Naive thymus-derived CD4-positive, alpha-beta T cell (primary cell): ENCODE measurements at regions of chr12 and their contacts with region 1.

Region 1: GRCh38 chr12:48936379-48936979 is 11.2 kb upstream of the FKBP11 start:
- DNase-seq: peak; percentile 65 to 87 (median 77)
- ATAC-seq: peak; percentile 80
- H3K4me3 ChIP-seq: no peak overlapping the region
- H3K4me3 Mint-ChIP-seq: no peak overlapping the region
- H3K27ac ChIP-seq: no peak overlapping the region
- H3K27ac Mint-ChIP-seq: peak overlapping the region; percentile 1 to 85 (median 68)
- H3K4me1 ChIP-seq: peaks cover 6 to 34% of the 10 kb centered on the region in 2 donors
- H3K4me1 Mint-ChIP-seq: peaks cover 12 to 31% (median 16%) of the 10 kb centered on the region in 7 donors
- H3K27me3 ChIP-seq: no peaks in the 10 kb centered on the region
- H3K27me3 Mint-ChIP-seq: no peaks in the 10 kb centered on the region

Region 2: DNA sequence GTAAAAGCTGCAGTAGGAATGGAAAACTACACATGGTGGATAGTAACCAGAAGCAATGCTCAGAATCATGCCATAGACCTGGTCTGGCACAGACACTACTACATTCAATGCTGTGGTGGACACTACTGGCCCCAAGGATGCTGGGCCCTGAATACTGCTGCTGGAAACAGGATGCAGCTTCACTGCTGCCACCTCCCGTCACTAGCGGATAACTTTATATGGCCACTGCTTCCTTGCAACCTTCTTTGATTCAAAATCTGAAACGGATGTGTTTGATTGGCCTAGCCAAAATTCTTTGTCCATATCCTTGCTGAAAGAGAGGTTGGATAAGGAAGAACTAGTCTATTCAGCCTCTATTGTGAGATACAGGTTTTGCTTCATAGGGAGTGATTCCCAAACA is 178.3 kb before region 1 on chr12:
- CTCF ChIA-PET with region 1: no interaction called
- POLR2A ChIA-PET with region 1: no interaction called
- intact Hi-C with region 1: loop called in 1 of 2 experiments (anchors 2 kb)
- DNase-seq: no peak
- ATAC-seq: no peak
- H3K4me3 ChIP-seq: no peak overlapping the region
- H3K4me3 Mint-ChIP-seq: no peak overlapping the region
- H3K27ac ChIP-seq: no peak overlapping the region
- H3K27ac Mint-ChIP-seq: no peak overlapping the region
- H3K4me1 ChIP-seq: no peaks in the 10 kb centered on the region
- H3K4me1 Mint-ChIP-seq: peaks cover 0 to 1% (median 0%) of the 10 kb centered on the region in 7 donors
- H3K27me3 ChIP-seq: no peaks in the 10 kb centered on the region
- H3K27me3 Mint-ChIP-seq: peaks cover 0 to 3% (median 0%) of the 10 kb centered on the region in 5 donors

Region 3: DNA sequence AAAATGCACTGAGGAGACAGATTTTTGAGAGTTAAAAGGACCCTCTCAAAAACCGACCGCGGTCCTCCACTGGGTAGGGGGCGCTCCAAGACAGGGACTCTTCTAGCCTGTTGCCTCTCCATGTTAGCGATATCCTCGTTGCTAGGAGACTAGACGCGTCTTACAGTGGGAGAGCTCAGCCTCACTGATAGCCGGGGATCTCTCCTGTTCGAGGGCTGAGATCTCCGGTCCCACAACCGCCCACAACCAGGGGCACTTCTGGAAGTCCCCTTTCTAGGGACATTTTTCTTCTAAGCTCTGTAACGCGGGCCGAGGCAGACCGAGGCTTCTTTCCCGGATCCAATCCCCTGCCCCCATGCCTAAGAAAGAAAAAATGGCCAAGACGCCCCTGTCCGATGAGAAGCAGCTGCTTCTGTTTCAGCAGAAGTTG is 32.5 kb before region 1 on chr12:
- CTCF ChIA-PET with region 1: interaction called, 128 read pairs
- POLR2A ChIA-PET with region 1: interaction called, 7 read pairs
- intact Hi-C with region 1: loop called (anchors 1 kb)
- DNase-seq: peak; percentile 64 to 89 (median 83)
- ATAC-seq: peak; percentile 100
- H3K4me3 ChIP-seq: peak overlapping the region; percentile 60
- H3K4me3 Mint-ChIP-seq: peak overlapping the region; percentile 48 to 81 (median 78)
- H3K27ac ChIP-seq: no peak overlapping the region
- H3K27ac Mint-ChIP-seq: peak overlapping the region in 5 of 9 donors; percentile 32 to 84 (median 57)
- H3K4me1 ChIP-seq: peaks cover 0 to 9% of the 10 kb centered on the region in 2 donors
- H3K4me1 Mint-ChIP-seq: peaks cover 0 to 11% (median 8%) of the 10 kb centered on the region in 7 donors
- H3K27me3 ChIP-seq: no peaks in the 10 kb centered on the region
- H3K27me3 Mint-ChIP-seq: peaks cover 0 to 7% (median 0%) of the 10 kb centered on the region in 5 donors

Region 4: DNA sequence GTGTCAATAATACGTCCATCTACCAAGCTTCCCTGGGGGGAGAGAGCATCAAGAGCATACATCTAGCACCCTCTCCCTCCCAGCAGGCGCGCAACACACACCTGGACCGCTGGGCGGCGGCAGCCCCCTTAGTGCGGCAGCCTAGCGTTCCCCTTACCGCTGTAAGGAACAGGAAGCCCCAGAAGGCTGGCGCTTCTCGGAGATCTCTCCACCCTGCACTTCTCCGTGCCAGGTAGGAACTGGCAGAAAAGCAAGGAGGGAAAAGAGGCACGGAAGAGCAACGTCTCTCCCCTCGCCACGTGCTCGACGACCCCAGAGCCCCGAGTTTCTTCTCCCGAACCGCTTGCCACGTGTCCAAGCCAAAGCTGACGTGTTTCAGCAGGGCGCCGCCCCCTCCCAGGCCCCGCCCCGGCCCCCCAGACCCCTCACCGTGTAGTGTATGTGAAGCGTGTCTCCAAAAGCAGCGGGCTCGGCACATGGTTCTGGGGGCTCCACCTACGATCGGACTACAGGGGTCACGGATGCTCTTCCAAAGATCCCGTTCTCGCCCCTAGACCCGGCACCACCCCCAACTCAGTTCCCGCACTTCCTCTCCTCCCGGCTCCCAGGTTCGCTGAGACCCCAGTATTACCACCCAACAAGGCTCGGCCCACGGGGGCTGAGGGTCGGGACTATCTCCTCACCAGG is 11.7 kb before region 1 on chr12:
- CTCF ChIA-PET with region 1: interaction called, 17 read pairs
- POLR2A ChIA-PET with region 1: interaction called, 18 read pairs
- intact Hi-C with region 1: loop called (anchors 1 kb)
- DNase-seq: peak; percentile 56 to 80 (median 77)
- ATAC-seq: peak; percentile 86
- H3K4me3 ChIP-seq: peak overlapping the region; percentile 72
- H3K4me3 Mint-ChIP-seq: peak overlapping the region; percentile 89 to 98 (median 93)
- H3K27ac ChIP-seq: peak overlapping the region; percentile 99
- H3K27ac Mint-ChIP-seq: peak overlapping the region; percentile 74 to 98 (median 95)
- H3K4me1 ChIP-seq: peaks cover 10 to 18% of the 10 kb centered on the region in 2 donors
- H3K4me1 Mint-ChIP-seq: peaks cover 18 to 52% (median 42%) of the 10 kb centered on the region in 7 donors
- H3K27me3 ChIP-seq: no peaks in the 10 kb centered on the region
- H3K27me3 Mint-ChIP-seq: no peaks in the 10 kb centered on the region

Region 5: DNA sequence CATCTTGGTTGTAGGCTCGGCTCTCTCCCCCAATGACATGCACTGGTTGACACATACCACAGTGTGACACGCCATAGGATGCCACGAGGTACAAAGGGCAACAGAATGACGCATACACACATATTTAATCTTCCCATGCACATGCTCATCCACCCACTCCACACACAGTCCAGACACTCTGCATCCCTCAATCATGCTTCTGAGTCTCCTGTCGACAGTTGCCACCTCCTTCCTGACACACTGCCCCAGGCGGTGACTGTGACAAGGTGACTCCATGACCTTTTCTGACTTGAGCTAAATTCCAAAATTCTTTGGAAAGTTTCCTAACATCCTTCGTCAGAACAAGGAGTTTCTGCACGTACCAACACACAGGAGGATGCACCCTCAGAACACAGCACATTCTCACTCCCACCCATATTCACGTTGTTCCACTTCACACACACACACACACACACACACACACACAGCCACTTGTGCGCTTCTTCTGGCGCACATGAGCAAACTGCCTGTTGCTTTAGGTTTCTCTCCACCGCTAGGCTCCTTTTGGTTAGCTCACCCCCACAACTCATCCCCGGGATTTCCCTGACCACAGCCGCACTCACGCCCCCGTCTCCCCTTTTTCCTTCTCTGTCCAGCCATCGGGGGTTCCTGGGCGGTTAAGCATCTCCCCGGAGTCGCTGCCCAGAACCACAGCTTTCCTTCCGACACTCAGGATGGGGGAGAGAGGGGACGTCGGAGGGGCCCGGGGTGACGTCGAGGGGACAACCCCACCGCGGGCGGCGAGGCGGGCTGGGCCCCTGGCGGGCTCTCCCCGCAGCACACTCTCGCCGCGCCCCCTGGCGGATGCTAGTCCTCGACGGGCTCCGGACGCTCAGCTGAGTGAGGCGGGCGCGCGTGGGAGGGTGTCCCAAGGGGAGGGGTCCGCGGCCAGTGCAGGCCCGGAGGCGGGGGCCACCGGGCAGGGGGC is 41.1 kb after region 1 on chr12:
- CTCF ChIA-PET with region 1: interaction called, 8 read pairs
- POLR2A ChIA-PET with region 1: interaction called, 3 read pairs
- intact Hi-C with region 1: loop called in 1 of 2 experiments (anchors 2 kb)
- DNase-seq: peak; percentile 52 to 90 (median 75)
- ATAC-seq: peak; percentile 77
- H3K4me3 ChIP-seq: no peak overlapping the region
- H3K4me3 Mint-ChIP-seq: peak overlapping the region; percentile 24 to 85 (median 56)
- H3K27ac ChIP-seq: no peak overlapping the region
- H3K27ac Mint-ChIP-seq: peak overlapping the region in 7 of 9 donors; percentile 26 to 81 (median 61)
- H3K4me1 ChIP-seq: peaks cover 37% of the 10 kb centered on the region in 2 donors
- H3K4me1 Mint-ChIP-seq: peaks cover 28 to 53% (median 47%) of the 10 kb centered on the region in 7 donors
- H3K27me3 ChIP-seq: peaks cover 3 to 11% of the 10 kb centered on the region in 2 donors
- H3K27me3 Mint-ChIP-seq: peaks cover 18 to 92% (median 40%) of the 10 kb centered on the region in 5 donors